ENCODE measurements at regions of chr12 and their contacts with region 1.

Region 1: DNA sequence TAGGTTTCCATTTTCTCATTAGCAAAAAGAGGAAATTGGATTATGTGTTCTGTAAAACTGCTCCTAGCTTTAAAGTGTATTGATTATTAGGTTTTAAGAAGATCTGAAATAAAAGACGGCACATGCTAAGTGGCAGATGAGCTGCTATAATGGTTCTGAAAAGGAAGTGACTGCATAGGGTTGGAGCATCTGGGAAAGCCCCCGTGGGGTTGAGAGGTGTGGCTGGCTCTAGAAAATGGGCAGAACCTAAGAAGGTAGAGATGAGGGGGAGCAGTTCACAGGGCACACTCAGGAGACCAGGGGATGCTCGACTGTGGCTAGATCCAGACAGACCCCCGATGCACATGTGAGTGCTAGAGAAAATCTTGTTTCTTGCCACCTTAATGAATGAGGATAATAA is 1.9 kb downstream of the IFNG-AS1 start:
- DNase-seq: peak; percentile 77
- H3K4me3 ChIP-seq: peak overlapping the region; percentile 78
- H3K27ac ChIP-seq: peak overlapping the region; percentile 97
- H3K4me1 ChIP-seq: peaks cover 63% of the 10 kb centered on the region
- CTCF ChIP-seq: no peak

Region 2: GRCh38 chr12:67122584-67122983 is 868.6 kb before region 1 on chr12:
- CTCF ChIA-PET with region 1: no interaction called
- POLR2A ChIA-PET with region 1: no interaction called
- intact Hi-C with region 1: no loop called
- DNase-seq: no peak
- H3K4me3 ChIP-seq: no peak overlapping the region
- H3K27ac ChIP-seq: no peak overlapping the region
- H3K4me1 ChIP-seq: no peaks in the 10 kb centered on the region
- CTCF ChIP-seq: no peak

Region 3: DNA sequence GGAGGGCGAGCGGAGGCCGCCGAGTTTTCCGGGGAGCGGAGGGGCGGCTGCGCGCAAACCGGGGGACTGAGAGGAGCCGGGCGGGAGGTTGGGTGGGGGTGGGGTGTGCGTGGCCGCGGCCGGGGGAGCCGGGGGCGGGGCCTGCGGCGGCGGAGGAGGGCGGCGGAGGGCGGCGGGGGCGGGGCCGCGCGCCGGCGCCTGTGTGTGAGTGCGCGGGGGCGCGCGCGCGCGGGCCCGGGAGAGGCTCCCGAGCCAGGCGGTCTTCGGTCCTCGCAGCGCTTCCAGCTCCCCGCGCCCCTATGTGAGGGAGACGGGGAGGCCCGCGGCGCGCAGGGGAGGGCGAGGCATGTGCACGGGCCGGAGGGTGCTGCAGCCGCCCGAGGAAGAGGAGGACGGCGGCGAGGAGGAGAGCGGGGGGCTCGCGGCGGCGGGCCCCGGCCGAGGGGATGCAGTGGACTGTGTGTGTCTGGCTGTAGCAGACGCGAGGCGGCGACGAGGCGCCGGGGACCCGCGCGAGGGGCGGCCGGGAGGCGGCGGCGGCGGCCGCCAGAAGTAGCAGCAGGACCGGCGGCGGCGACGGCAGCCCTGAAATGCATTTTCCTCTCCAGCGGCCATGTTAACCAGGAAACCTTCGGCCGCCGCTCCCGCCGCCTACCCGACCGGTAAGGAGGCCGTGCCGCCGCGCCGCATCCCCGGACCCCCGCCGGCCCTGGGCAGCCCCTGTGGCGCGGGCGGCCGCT is 342.5 kb before region 1 on chr12 and contains the start of gene DYRK2:
- CTCF ChIA-PET with region 1: no interaction called
- POLR2A ChIA-PET with region 1: interaction called, 3 read pairs
- intact Hi-C with region 1: loop called (anchors 2 kb)
- DNase-seq: peak; percentile 89
- H3K4me3 ChIP-seq: peak within 1 kb of the TSS; percentile 98
- H3K27ac ChIP-seq: peak within 1 kb of the TSS; percentile 64
- H3K4me1 ChIP-seq: peaks cover 25% of the 10 kb centered on the region
- CTCF ChIP-seq: 0 out of 2 replicates have a peak, but pooled peaks have one; percentile 26
- total RNA-seq, gene DYRK2: 25.3 and 30.6 TPM in 2 replicates

Region 4: DNA sequence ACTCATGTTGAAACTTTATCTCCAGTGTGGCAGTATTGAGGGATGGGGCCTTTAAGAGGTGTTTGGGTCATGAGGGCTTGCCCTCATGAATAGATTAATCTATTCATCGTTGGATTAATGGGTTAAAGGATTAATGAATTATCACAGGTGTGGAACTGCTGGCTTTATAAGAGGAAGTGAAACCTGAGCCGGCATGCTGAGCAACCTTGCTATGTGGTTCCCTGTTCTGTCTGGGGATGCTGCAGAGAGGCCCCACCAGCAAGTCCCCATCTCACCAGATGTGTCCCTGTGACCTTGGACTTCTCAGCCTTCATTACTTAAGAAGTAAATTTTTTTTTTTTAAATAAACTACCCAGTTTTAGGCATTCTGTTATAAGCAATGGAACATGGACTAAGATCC is 233.0 kb before region 1 on chr12:
- CTCF ChIA-PET with region 1: no interaction called
- POLR2A ChIA-PET with region 1: no interaction called
- intact Hi-C with region 1: loop called (anchors 5 kb)
- DNase-seq: peak; percentile 93
- H3K4me3 ChIP-seq: peak overlapping the region; percentile 13
- H3K27ac ChIP-seq: peak overlapping the region; percentile 78
- H3K4me1 ChIP-seq: peaks cover 65% of the 10 kb centered on the region
- CTCF ChIP-seq: 0 out of 2 replicates have a peak, but pooled peaks have one; percentile 26

Region 5: GRCh38 chr12:67827820-67828383 is 163.3 kb before region 1 on chr12:
- CTCF ChIA-PET with region 1: no interaction called
- POLR2A ChIA-PET with region 1: no interaction called
- intact Hi-C with region 1: no loop called
- DNase-seq: no peak
- H3K4me3 ChIP-seq: no peak overlapping the region
- H3K27ac ChIP-seq: no peak overlapping the region
- H3K4me1 ChIP-seq: no peaks in the 10 kb centered on the region
- CTCF ChIP-seq: no peak

Region 6: GRCh38 chr12:68012712-68013111 is 21.6 kb after region 1 on chr12:
- CTCF ChIA-PET with region 1: interaction called, 3 read pairs
- POLR2A ChIA-PET with region 1: interaction called, 17 read pairs
- intact Hi-C with region 1: no loop called
- DNase-seq: peak; percentile 83
- H3K4me3 ChIP-seq: peak overlapping the region; percentile 30
- H3K27ac ChIP-seq: peak overlapping the region; percentile 59
- H3K4me1 ChIP-seq: peaks cover 34% of the 10 kb centered on the region
- CTCF ChIP-seq: no peak

Measured in OCI-LY7 (cell line).